ENCODE measurements at regions of chr11 and their contacts with region 1.

Region 1: DNA sequence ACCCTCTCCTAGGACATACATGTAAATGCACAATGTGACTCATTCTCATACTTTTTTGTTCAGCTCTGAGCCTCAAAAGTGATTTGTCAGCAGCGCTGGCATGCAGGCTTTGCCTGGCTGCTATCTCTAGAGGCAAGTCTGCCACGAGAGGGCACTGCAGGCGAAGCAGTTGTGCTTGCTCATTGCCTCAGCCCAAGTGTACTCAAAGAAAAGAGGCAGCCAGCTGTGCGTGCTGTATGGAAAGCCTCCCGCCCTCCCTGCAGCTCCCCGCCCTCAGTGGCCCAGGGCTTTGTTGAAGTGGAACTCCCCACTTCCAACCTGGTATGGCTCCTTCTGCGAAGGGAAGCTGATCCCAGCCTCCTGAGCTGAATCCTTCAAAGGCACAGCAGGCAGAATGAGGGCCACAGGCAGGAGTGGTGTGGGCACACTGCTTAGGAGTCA is 16.3 kb downstream of the SDHAF2 start:
- DNase-seq: peak; percentile 67 to 96
- H3K4me3 ChIP-seq: no peak overlapping the region
- H3K27ac ChIP-seq: peak overlapping the region; percentile 36 to 73
- H3K4me1 ChIP-seq: peaks cover 5 to 16% of the 10 kb centered on the region in 2 donors
- H3K27me3 ChIP-seq: no peaks in the 10 kb centered on the region
- CTCF ChIP-seq: peak; percentile 83 to 92 (median 84)

Region 2: DNA sequence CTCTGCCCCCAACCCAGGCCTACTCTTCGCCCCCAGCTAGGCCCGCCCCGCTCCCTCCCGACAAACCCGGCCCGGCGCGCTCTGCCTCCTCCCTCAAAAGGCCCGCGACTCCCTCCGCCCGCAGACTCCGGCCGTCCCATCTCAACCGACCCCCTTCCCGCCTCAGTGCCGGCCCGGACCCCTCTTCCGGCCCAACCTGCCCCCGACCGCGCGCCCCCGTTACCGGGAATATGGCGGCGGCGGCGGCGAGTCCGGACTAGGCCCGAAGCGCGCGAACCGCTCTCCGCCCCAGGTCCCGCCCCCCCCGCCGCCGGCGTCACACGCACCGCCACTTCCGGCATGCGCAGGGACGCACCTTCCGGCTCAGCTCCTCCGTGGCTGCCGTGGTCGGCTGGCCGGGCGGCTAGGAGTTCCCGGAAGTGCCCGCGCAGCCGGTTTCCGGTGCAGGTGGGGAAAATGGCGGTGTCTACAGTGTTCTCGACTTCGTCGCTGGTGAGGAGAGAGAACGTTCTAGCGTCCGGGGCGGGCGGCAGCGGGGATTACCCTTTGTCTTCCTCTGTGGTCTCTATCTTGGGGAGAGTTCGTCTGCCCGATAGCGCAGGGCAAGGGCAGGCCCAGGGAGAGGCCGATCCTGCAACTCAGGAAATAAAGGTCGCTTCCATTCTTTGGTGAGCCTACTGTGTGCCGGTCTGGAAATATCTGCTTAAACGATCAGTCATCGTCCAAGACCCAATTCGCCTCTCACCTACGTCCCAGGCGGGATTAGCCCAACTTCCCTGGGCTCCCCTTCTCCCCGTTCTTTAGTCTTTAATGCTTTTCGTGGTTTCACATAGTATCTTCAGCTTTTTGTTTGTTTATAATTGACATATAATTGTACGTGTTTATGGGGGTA is 16.3 kb before region 1 on chr11 and contains the starts of genes CPSF7 and SDHAF2:
- intact Hi-C with region 1: no loop called
- DNase-seq: peak; percentile 77 to 98
- H3K4me3 ChIP-seq: peak within 1 kb of the TSS; percentile 70 to 77
- H3K27ac ChIP-seq: peak within 1 kb of the TSS; percentile 98 to 99
- H3K4me1 ChIP-seq: peaks cover 0 to 10% of the 10 kb centered on the region in 2 donors
- H3K27me3 ChIP-seq: no peaks in the 10 kb centered on the region
- CTCF ChIP-seq: no peak
- total RNA-seq, gene CPSF7: 22.9 TPM
- total RNA-seq, gene SDHAF2: 13.6 TPM

Region 3: GRCh38 chr11:61477727-61478148 is 31.5 kb after region 1 on chr11:
- intact Hi-C with region 1: loop called (anchors 2 kb)
- DNase-seq: no peak
- H3K4me3 ChIP-seq: no peak overlapping the region
- H3K27ac ChIP-seq: no peak overlapping the region
- H3K4me1 ChIP-seq: peaks cover 0 to 6% of the 10 kb centered on the region in 2 donors
- H3K27me3 ChIP-seq: no peaks in the 10 kb centered on the region
- CTCF ChIP-seq: peak; percentile 82 to 96 (median 95)

Region 4: GRCh38 chr11:61516675-61517572 is 70.7 kb after region 1 on chr11:
- intact Hi-C with region 1: loop called (anchors 1 kb)
- DNase-seq: peak in 1 of 2 donors; percentile 72
- H3K4me3 ChIP-seq: peak overlapping the region in 1 of 2 donors; percentile 11
- H3K27ac ChIP-seq: no peak overlapping the region
- H3K4me1 ChIP-seq: no peaks in the 10 kb centered on the region
- H3K27me3 ChIP-seq: peaks cover 3% of the 10 kb centered on the region
- CTCF ChIP-seq: peak; percentile 92 to 99 (median 98)

Region 5: GRCh38 chr11:61581030-61581928 is 135.0 kb after region 1 on chr11 and contains the start of gene SYT7:
- intact Hi-C with region 1: loop called (anchors 10 kb)
- DNase-seq: peak; percentile 73 to 97
- H3K4me3 ChIP-seq: peak within 1 kb of the TSS; percentile 65 to 72
- H3K27ac ChIP-seq: peak within 1 kb of the TSS in 1 of 2 donors; percentile 55
- H3K4me1 ChIP-seq: peaks cover 6 to 14% of the 10 kb centered on the region in 2 donors
- H3K27me3 ChIP-seq: peaks cover 10% of the 10 kb centered on the region
- CTCF ChIP-seq: peak in 1 of 3 experiments; percentile 38
- total RNA-seq, gene SYT7: 1.8 TPM

Region 6: DNA sequence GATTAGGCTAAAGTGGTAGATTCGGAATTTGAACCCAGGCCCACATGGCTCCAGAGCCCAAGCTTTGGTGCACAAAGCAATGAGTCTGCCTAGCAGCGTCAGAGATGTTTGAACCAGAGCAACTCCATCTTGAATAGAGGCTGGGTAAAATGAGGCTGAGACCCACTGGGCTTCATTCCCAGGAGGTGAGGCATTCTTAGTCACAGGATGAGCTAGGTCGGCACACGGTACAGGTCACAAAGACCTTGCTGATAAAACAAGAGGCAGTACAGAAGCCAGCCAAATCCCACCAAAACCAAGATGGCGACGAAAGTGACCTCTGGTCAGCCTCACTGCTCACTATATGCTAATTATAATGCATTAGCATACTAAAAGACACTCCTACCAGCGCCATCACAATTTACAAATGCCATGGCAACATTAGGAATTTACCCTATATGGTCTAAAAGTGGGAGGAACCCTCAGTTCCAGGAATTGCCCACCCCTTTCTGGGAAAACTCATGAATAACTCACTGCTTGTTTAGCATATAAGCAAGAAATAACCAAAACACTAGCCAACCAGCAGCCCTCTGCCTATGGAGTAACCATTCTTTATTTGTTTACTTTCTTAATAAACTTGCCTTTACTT is 193.7 kb after region 1 on chr11:
- intact Hi-C with region 1: loop called (anchors 1 kb)
- DNase-seq: no peak
- H3K4me3 ChIP-seq: no peak overlapping the region
- H3K27ac ChIP-seq: no peak overlapping the region
- H3K4me1 ChIP-seq: no peaks in the 10 kb centered on the region
- H3K27me3 ChIP-seq: no peaks in the 10 kb centered on the region
- CTCF ChIP-seq: no peak

Measured in ascending aorta (tissue), 2 donors.